Heart left ventricle (tissue), 16 donors: ENCODE measurements at regions of chr12 and their contacts with region 1.

Region 1: DNA sequence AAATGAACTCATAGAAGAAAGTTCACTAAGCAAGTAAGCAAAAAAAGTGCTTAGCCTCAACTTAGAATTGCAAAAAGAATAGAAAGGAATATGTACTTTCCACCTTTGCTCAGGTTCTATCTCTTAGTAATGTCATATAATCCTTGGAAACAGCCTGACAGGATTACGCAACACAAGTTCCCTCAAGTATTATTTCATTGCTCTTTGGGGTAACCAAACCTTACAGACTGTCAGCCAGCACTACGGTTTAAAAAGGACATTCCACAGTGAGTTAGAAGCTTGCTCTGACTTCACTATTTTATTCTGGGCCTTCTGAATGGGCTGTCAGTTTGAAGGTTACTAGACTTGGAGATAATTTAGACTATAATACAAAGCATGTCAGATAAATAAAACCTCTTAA is 264.0 kb downstream of the ATXN7L3B start:
- DNase-seq: no peak
- ATAC-seq: no peak
- H3K4me3 ChIP-seq: no peak overlapping the region
- H3K27ac ChIP-seq: no peak overlapping the region
- H3K4me1 ChIP-seq: no peaks in the 10 kb centered on the region
- H3K27me3 ChIP-seq: no peaks in the 10 kb centered on the region
- CTCF ChIP-seq: no peak
- POLR2A ChIP-seq: no peak

Region 2: GRCh38 chr12:74820324-74820723 is 18.7 kb after region 1 on chr12:
- intact Hi-C with region 1: no loop called
- DNase-seq: no peak
- ATAC-seq: no peak
- H3K4me3 ChIP-seq: no peak overlapping the region
- H3K27ac ChIP-seq: no peak overlapping the region
- H3K4me1 ChIP-seq: no peaks in the 10 kb centered on the region
- H3K27me3 ChIP-seq: no peaks in the 10 kb centered on the region
- CTCF ChIP-seq: no peak
- POLR2A ChIP-seq: no peak

Region 3: DNA sequence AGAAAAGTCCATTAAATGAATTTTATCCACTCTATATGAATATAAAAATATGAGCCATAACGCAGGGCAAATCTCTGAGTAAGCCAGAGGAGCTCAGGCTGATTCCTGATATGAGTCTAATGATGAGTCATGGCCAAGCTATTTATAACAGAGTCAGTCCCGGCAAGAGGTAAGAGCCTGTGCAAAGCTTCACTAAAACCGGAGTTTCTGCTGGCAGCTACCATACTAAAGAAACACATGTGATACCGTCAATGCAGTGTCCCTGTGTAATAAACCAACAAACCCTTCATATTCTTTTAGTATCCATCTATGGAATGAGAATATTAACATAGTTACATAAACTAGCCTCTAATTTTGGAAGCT is 88.6 kb after region 1 on chr12:
- intact Hi-C with region 1: no loop called
- DNase-seq: no peak
- ATAC-seq: peak; percentile 83 to 93 (median 88)
- H3K4me3 ChIP-seq: no peak overlapping the region
- H3K27ac ChIP-seq: no peak overlapping the region
- H3K4me1 ChIP-seq: peaks cover 0 to 9% (median 0%) of the 10 kb centered on the region in 12 donors
- H3K27me3 ChIP-seq: no peaks in the 10 kb centered on the region
- CTCF ChIP-seq: no peak
- POLR2A ChIP-seq: no peak

Region 4: GRCh38 chr12:75289753-75290152 is 488.1 kb after region 1 on chr12:
- intact Hi-C with region 1: loop called in 1 of 10 experiments (anchors 10 kb)
- DNase-seq: no peak
- ATAC-seq: no peak
- H3K4me3 ChIP-seq: no peak overlapping the region
- H3K27ac ChIP-seq: no peak overlapping the region
- H3K4me1 ChIP-seq: no peaks in the 10 kb centered on the region
- H3K27me3 ChIP-seq: no peaks in the 10 kb centered on the region
- CTCF ChIP-seq: peak in 3 of 12 donors; percentile 20 to 32 (median 20)
- POLR2A ChIP-seq: no peak